GM12878 (cell line): ENCODE measurements at regions of chr2 and their contacts with region 1.

Region 1: GRCh38 chr2:171491292-171491691 is 31.0 kb upstream of the CYBRD1 start:
- DNase-seq: no peak
- ATAC-seq: no peak
- H3K4me3 ChIP-seq: no peak overlapping the region
- H3K27ac ChIP-seq: no peak overlapping the region
- H3K4me1 ChIP-seq: no peaks in the 10 kb centered on the region
- H3K27me3 ChIP-seq: no peaks in the 10 kb centered on the region
- CTCF ChIP-seq: no peak
- EP300 ChIP-seq: no peak
- POLR2A ChIP-seq: no peak
- RAD21 ChIP-seq: no peak

Region 2: GRCh38 chr2:171447675-171448074 is 43.6 kb before region 1 on chr2:
- CTCF ChIA-PET with region 1: no interaction called
- POLR2A ChIA-PET with region 1: no interaction called
- RAD21 ChIA-PET with region 1: no interaction called
- SMC1A ChIA-PET with region 1: no interaction called
- in situ Hi-C with region 1: no loop called
- intact Hi-C with region 1: no loop called
- DNase-seq: no peak
- ATAC-seq: peak; percentile 41; the same call in 2 of the 3 replicates
- H3K4me3 ChIP-seq: no peak overlapping the region
- H3K27ac ChIP-seq: no peak overlapping the region
- H3K4me1 ChIP-seq: no peaks in the 10 kb centered on the region
- H3K27me3 ChIP-seq: no peaks in the 10 kb centered on the region
- CTCF ChIP-seq: peak; percentile 16 to 39 (median 22); a peak in 3 of 6 replicates
- EP300 ChIP-seq: no peak
- POLR2A ChIP-seq: no peak
- RAD21 ChIP-seq: peak; percentile 55

Region 3: GRCh38 chr2:171522052-171522787 is 30.9 kb after region 1 on chr2 and contains the start of gene CYBRD1:
- CTCF ChIA-PET with region 1: no interaction called
- POLR2A ChIA-PET with region 1: no interaction called
- RAD21 ChIA-PET with region 1: no interaction called
- SMC1A ChIA-PET with region 1: no interaction called
- in situ Hi-C with region 1: no loop called
- intact Hi-C with region 1: loop called (anchors 1 kb)
- DNase-seq: no peak
- ATAC-seq: peak; percentile 79
- H3K4me3 ChIP-seq: peak within 1 kb of the TSS; percentile 95
- H3K27ac ChIP-seq: peak within 1 kb of the TSS; percentile 81
- H3K4me1 ChIP-seq: peaks cover 6% of the 10 kb centered on the region; the same call in 1 of the 2 replicates
- H3K27me3 ChIP-seq: no peaks in the 10 kb centered on the region
- CTCF ChIP-seq: 0 out of 6 replicates have a peak, but pooled peaks of 1 of the 3 experiments have one; percentile 4
- EP300 ChIP-seq: no peak
- POLR2A ChIP-seq: peak; percentile 90
- RAD21 ChIP-seq: no peak
- polyA plus RNA-seq, gene CYBRD1: 10.8 to 13.2 TPM